OCI-LY7 (cell line): ENCODE measurements at regions of chr2 and their contacts with region 1.

Region 1: GRCh38 chr2:144865670-144866069 is 345.8 kb upstream of the ZEB2 start:
- DNase-seq: no peak
- H3K4me3 ChIP-seq: no peak overlapping the region
- H3K27ac ChIP-seq: no peak overlapping the region
- H3K4me1 ChIP-seq: no peaks in the 10 kb centered on the region
- CTCF ChIP-seq: no peak

Region 2: GRCh38 chr2:144493027-144493809 is 372.5 kb before region 1 on chr2:
- CTCF ChIA-PET with region 1: no interaction called
- POLR2A ChIA-PET with region 1: no interaction called
- intact Hi-C with region 1: no loop called
- DNase-seq: no peak
- H3K4me3 ChIP-seq: no peak overlapping the region
- H3K27ac ChIP-seq: no peak overlapping the region
- H3K4me1 ChIP-seq: no peaks in the 10 kb centered on the region
- CTCF ChIP-seq: no peak

Region 3: GRCh38 chr2:144516981-144517865 is 348.4 kb before region 1 on chr2:
- CTCF ChIA-PET with region 1: no interaction called
- POLR2A ChIA-PET with region 1: no interaction called
- intact Hi-C with region 1: no loop called
- DNase-seq: peak; percentile 64
- H3K4me3 ChIP-seq: peak overlapping the region; percentile 83
- H3K27ac ChIP-seq: no peak overlapping the region
- H3K4me1 ChIP-seq: peaks cover 36% of the 10 kb centered on the region
- CTCF ChIP-seq: no peak

Region 4: GRCh38 chr2:145007093-145007959 is 141.7 kb after region 1 on chr2:
- CTCF ChIA-PET with region 1: no interaction called
- POLR2A ChIA-PET with region 1: interaction called, 11 read pairs
- intact Hi-C with region 1: no loop called
- DNase-seq: no peak
- H3K4me3 ChIP-seq: no peak overlapping the region
- H3K27ac ChIP-seq: no peak overlapping the region
- H3K4me1 ChIP-seq: peaks cover 4% of the 10 kb centered on the region
- CTCF ChIP-seq: no peak

Region 5: GRCh38 chr2:145110668-145111356 is 245.1 kb after region 1 on chr2:
- CTCF ChIA-PET with region 1: no interaction called
- POLR2A ChIA-PET with region 1: no interaction called
- intact Hi-C with region 1: no loop called
- DNase-seq: no peak
- H3K4me3 ChIP-seq: no peak overlapping the region
- H3K27ac ChIP-seq: no peak overlapping the region
- H3K4me1 ChIP-seq: no peaks in the 10 kb centered on the region
- CTCF ChIP-seq: no peak